ENCODE measurements at regions of chr18 and their contacts with region 1.

Region 1: DNA sequence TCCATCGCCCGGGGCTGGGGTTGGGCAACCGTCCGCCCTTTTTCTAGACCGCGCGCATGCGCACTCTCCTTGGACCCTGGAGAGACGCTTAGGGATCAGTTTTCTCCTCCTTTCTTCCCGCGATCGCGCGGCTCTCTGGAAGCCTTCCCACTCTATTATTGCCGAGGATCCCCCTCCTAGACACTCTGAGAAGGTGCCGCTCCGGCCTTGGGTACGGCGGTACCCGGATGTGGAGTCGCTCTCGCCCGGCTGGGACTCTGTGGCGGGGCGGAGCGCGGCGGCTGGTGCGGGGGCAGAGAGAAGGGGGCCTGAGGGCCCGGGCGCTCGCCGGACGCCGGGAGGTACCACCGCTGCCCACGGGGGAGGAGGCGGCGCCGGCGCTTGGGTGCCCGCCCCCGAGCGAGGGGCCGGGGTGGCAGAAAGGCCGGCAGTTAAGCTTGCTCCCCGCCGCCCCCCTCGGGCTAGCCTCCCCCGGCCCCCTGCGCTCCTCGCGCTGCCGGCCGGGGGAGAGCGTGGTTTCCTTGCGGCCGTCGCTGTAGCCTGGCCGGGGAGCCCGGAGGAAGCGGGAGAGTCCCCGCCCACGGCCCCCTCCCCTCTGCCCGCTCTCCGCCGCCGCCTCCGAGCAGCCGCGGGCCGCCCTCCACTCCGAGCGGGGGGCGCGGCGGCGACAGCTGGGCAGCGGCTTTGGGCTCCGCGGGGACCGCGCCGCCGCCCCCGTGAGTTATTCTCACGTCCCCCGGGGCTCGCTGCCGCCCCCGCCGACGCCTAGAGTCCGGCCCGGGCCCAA is at the start of gene MIB1:
- DNase-seq: peak; percentile 96
- H3K4me3 ChIP-seq: peak within 1 kb of the TSS; percentile 89 to 95
- H3K27ac ChIP-seq: peak within 1 kb of the TSS; percentile 98
- H3K4me1 ChIP-seq: peaks cover 0 to 2% of the 10 kb centered on the region in 2 experiments; a peak in 2 of 4 replicates
- H3K27me3 ChIP-seq: no peaks in the 10 kb centered on the region
- CTCF ChIP-seq: no peak
- EP300 ChIP-seq: no peak
- RAD21 ChIP-seq: no peak
- polyA plus RNA-seq, gene MIB1: 5.0 and 6.5 TPM in 2 replicates

Region 2: GRCh38 chr18:21704603-21705364 is 36.1 kb before region 1 on chr18 and contains the start of gene ABHD3:
- CTCF ChIA-PET with region 1: interaction called, 6 read pairs
- POLR2A ChIA-PET with region 1: interaction called, 17 read pairs
- DNase-seq: peak; percentile 95
- H3K4me3 ChIP-seq: peak within 1 kb of the TSS; percentile 71 to 87
- H3K27ac ChIP-seq: peak within 1 kb of the TSS; percentile 56 to 64
- H3K4me1 ChIP-seq: peaks cover 0 to 4% of the 10 kb centered on the region in 2 experiments; a peak in 2 of 4 replicates
- H3K27me3 ChIP-seq: no peaks in the 10 kb centered on the region
- CTCF ChIP-seq: peak; percentile 33; the same call in 1 of the 2 replicates
- EP300 ChIP-seq: no peak
- RAD21 ChIP-seq: peak; percentile 7; the same call in 1 of the 2 replicates
- polyA plus RNA-seq, gene ABHD3: 4.3 and 5.4 TPM in 2 replicates

Measured in SK-N-SH (cell line).